ENCODE measurements at regions of chr11 and their contacts with region 1.

Region 1: GRCh38 chr11:122853971-122854446 is 15.7 kb downstream of the CRTAM start:
- DNase-seq: peak; percentile 91
- H3K4me3 ChIP-seq: no peak overlapping the region
- H3K27ac ChIP-seq: no peak overlapping the region
- H3K4me1 ChIP-seq: peaks cover 40% of the 10 kb centered on the region
- H3K27me3 ChIP-seq: no peaks in the 10 kb centered on the region
- CTCF ChIP-seq: peak; percentile 88

Region 2: GRCh38 chr11:122226810-122227379 is 627.1 kb before region 1 on chr11:
- CTCF ChIA-PET with region 1: no interaction called
- POLR2A ChIA-PET with region 1: no interaction called
- intact Hi-C with region 1: no loop called
- DNase-seq: no peak
- H3K4me3 ChIP-seq: no peak overlapping the region
- H3K27ac ChIP-seq: no peak overlapping the region
- H3K4me1 ChIP-seq: peaks cover 22% of the 10 kb centered on the region
- H3K27me3 ChIP-seq: no peaks in the 10 kb centered on the region
- CTCF ChIP-seq: no peak

Region 3: DNA sequence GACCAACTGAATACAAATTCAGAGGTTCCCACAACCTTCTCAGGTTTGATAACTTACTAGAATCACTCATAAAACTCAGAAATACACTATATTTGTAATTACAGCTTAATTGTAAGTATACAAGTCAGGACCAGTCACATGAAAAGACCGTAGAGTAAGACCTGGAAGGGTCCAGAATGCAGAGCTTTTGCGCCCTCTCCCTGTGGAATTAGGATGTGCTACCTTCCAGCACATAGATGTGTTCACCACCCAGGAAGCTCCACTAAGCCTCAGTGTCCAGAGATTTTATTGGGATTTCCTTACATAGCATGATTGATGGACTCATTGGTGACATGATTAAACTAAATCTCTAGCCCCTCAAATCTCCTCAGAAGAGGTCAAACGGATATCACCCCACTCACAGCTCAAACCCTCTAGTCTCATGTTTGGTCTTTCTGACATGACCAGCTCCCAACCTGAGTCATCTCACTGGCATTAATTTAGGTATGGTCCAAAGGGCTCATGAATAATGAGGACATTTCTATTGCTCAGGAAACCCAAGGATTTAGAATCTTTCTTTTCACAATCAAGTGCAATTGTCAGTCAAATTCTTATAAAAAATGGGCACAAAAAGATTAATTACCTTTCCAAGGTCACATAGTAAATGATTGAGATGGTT is 275.7 kb before region 1 on chr11:
- CTCF ChIA-PET with region 1: interaction called, 3 read pairs
- POLR2A ChIA-PET with region 1: interaction called, 5 read pairs
- intact Hi-C with region 1: loop called (anchors 2 kb)
- DNase-seq: peak; percentile 58
- H3K4me3 ChIP-seq: no peak overlapping the region
- H3K27ac ChIP-seq: no peak overlapping the region
- H3K4me1 ChIP-seq: no peaks in the 10 kb centered on the region
- H3K27me3 ChIP-seq: no peaks in the 10 kb centered on the region
- CTCF ChIP-seq: peak; percentile 63

Region 4: GRCh38 chr11:122628810-122629555 is 225.0 kb before region 1 on chr11:
- CTCF ChIA-PET with region 1: interaction called, 25 read pairs
- POLR2A ChIA-PET with region 1: no interaction called
- intact Hi-C with region 1: loop called (anchors 2 kb)
- DNase-seq: peak; percentile 89
- H3K4me3 ChIP-seq: no peak overlapping the region
- H3K27ac ChIP-seq: no peak overlapping the region
- H3K4me1 ChIP-seq: no peaks in the 10 kb centered on the region
- H3K27me3 ChIP-seq: no peaks in the 10 kb centered on the region
- CTCF ChIP-seq: peak; percentile 93

Region 5: GRCh38 chr11:122796128-122796717 is 57.8 kb before region 1 on chr11:
- CTCF ChIA-PET with region 1: interaction called, 54 read pairs
- POLR2A ChIA-PET with region 1: no interaction called
- intact Hi-C with region 1: loop called (anchors 1 kb)
- DNase-seq: peak; percentile 79
- H3K4me3 ChIP-seq: no peak overlapping the region
- H3K27ac ChIP-seq: no peak overlapping the region
- H3K4me1 ChIP-seq: no peaks in the 10 kb centered on the region
- H3K27me3 ChIP-seq: no peaks in the 10 kb centered on the region
- CTCF ChIP-seq: peak; percentile 98

Measured in A673 (cell line).